Activated CD8-positive, alpha-beta T cell treated with anti-CD3 and anti-CD28 coated beads, Interleukin-2, amount 10 ng/mL, durations not matched to agents 7 days and 5 days (primary cell): ENCODE measurements at regions of chr14 and their contacts with region 1.

Region 1: DNA sequence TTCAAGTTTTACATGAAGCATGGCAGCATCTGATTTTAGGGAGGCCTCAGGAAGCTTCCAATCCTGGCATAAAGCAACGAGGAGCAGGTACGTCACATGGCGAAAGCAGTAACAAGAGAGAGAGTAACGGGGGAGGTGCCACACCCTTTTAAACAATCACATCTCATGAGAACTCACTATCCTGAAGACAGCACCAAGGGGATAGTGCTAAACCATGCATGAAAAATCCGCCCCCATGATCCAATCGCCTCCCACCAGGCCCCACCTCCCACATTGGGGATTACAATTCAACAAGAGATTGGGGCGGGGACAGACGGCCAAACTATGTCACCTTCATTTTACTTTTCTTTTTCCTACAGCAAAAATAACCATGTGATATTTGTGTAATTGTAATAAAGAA is 7.2 kb upstream of the MAP3K9 start:
- DNase-seq: no peak
- ATAC-seq: no peak
- H3K4me3 Mint-ChIP-seq: no peak overlapping the region
- H3K27ac Mint-ChIP-seq: no peak overlapping the region
- H3K4me1 Mint-ChIP-seq: peaks cover 36% of the 10 kb centered on the region
- H3K27me3 Mint-ChIP-seq: peaks cover 16% of the 10 kb centered on the region

Region 2: GRCh38 chr14:70622111-70622712 is 194.3 kb before region 1 on chr14:
- CTCF ChIA-PET with region 1: interaction called, 25 read pairs
- POLR2A ChIA-PET with region 1: no interaction called
- DNase-seq: peak; percentile 72
- ATAC-seq: peak; percentile 79
- H3K4me3 Mint-ChIP-seq: no peak overlapping the region
- H3K27ac Mint-ChIP-seq: no peak overlapping the region
- H3K4me1 Mint-ChIP-seq: no peaks in the 10 kb centered on the region
- H3K27me3 Mint-ChIP-seq: peaks cover 4% of the 10 kb centered on the region

Region 3: DNA sequence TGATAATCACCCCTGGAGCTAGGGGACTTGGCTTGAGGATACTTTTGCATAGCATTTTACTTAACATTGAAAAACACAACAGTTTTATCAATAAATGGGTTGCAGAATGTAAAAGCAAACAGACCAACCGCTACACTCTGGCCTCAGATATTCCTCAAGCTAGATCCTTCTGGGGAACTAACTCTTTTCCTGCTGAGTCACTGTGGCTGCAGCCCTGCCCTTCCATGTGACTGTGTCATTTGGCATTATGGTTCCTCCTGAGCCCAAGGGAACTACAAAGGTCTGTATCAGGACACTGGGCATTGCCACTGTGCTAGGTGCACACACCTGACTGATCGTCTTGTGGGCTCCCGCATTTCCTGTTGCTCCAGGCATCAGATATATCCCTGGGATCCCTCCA is 118.2 kb before region 1 on chr14:
- CTCF ChIA-PET with region 1: no interaction called
- POLR2A ChIA-PET with region 1: no interaction called
- DNase-seq: no peak
- ATAC-seq: no peak
- H3K4me3 Mint-ChIP-seq: no peak overlapping the region
- H3K27ac Mint-ChIP-seq: no peak overlapping the region
- H3K4me1 Mint-ChIP-seq: no peaks in the 10 kb centered on the region
- H3K27me3 Mint-ChIP-seq: no peaks in the 10 kb centered on the region

Region 4: DNA sequence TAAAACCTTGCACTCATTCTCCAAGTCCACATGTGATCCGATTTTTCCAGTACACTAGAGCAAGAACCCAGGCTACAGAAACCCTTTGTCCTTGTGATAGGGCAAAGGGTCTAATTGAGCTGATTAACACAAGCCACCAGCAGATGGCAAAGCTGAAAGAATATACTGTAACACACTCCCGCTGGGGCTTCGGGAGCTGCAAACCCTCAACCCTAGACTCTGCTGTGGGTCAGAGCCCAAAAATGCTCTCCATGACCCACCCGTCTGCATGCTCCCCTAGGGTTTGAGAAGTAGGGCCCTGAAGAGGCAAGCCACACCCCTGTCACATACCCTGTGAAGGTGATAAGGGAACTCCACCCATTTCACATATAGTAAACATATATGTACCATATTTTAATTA is 57.1 kb after region 1 on chr14:
- CTCF ChIA-PET with region 1: interaction called, 30 read pairs
- POLR2A ChIA-PET with region 1: interaction called, 3 read pairs
- DNase-seq: peak; percentile 36
- ATAC-seq: peak; percentile 17
- H3K4me3 Mint-ChIP-seq: no peak overlapping the region
- H3K27ac Mint-ChIP-seq: peak overlapping the region; percentile 55
- H3K4me1 Mint-ChIP-seq: peaks cover 36% of the 10 kb centered on the region
- H3K27me3 Mint-ChIP-seq: no peaks in the 10 kb centered on the region

Region 5: GRCh38 chr14:70887207-70887681 is 70.7 kb after region 1 on chr14:
- CTCF ChIA-PET with region 1: interaction called, 73 read pairs
- POLR2A ChIA-PET with region 1: interaction called, 4 read pairs
- DNase-seq: no peak
- ATAC-seq: peak; percentile 28
- H3K4me3 Mint-ChIP-seq: peak overlapping the region; percentile 64
- H3K27ac Mint-ChIP-seq: peak overlapping the region; percentile 92
- H3K4me1 Mint-ChIP-seq: peaks cover 97% of the 10 kb centered on the region
- H3K27me3 Mint-ChIP-seq: no peaks in the 10 kb centered on the region

Region 6: GRCh38 chr14:70972107-70972976 is 155.8 kb after region 1 on chr14:
- CTCF ChIA-PET with region 1: interaction called, 49 read pairs
- POLR2A ChIA-PET with region 1: interaction called, 3 read pairs
- DNase-seq: peak; percentile 90
- ATAC-seq: peak; percentile 81
- H3K4me3 Mint-ChIP-seq: no peak overlapping the region
- H3K27ac Mint-ChIP-seq: peak overlapping the region; percentile 54
- H3K4me1 Mint-ChIP-seq: peaks cover 23% of the 10 kb centered on the region
- H3K27me3 Mint-ChIP-seq: no peaks in the 10 kb centered on the region